ENCODE measurements at regions of chr12 and their contacts with region 1.

Region 1: DNA sequence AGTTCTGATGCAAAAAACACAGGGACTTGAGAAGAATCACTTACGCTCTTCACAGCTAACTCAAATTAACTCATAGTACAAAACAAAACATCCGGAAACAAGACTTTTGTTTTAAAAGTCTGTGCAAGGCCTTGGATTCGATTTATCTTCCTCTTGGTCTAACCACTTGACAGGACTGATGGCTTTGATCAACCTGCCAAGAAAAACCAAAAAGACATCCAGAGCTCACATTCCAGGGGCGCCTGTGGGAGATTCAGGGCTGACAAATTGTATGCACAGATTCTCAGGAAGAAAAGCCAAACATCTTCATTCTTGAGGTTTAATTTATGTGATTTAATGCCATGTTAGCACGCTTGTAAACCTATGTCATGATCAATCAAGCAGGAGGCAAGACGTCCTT is 129.1 kb upstream of the TMCC3 start:
- DNase-seq: no peak
- H3K4me3 ChIP-seq: no peak overlapping the region
- H3K27ac ChIP-seq: no peak overlapping the region
- H3K4me1 ChIP-seq: peaks cover 0 to 27% (median 14%) of the 10 kb centered on the region in 4 donors
- H3K27me3 ChIP-seq: no peaks in the 10 kb centered on the region
- CTCF ChIP-seq: no peak
- EP300 ChIP-seq: no peak
- POLR2A ChIP-seq: no peak

Region 2: DNA sequence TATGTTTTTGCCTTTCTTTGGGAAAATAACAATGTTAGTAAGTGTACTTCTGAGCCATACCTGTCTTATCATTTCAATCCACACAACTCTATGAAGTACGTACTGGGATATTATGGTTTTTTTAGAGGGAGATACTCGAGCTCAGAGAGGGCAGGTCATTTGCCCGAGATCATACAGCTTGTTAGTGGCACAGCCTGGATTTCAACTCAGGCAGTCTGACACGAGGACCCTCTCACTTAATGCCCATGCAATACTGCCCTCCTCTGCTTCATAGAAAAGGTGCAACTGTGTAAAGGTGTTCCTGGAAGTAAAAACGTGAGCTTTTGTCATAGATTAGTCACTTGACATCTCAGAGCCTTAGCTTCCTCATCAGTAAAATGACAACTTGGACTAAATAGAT is 96.0 kb after region 1 on chr12:
- intact Hi-C with region 1: loop called (anchors 10 kb)
- DNase-seq: peak; percentile 50
- H3K4me3 ChIP-seq: no peak overlapping the region
- H3K27ac ChIP-seq: peak overlapping the region in 3 of 4 donors; percentile 80 to 84 (median 82)
- H3K4me1 ChIP-seq: peaks cover 19 to 48% (median 44%) of the 10 kb centered on the region in 4 donors
- H3K27me3 ChIP-seq: peaks cover 0 to 15% (median 0%) of the 10 kb centered on the region in 4 donors
- CTCF ChIP-seq: peak; percentile 48 to 55 (median 49)
- EP300 ChIP-seq: no peak
- POLR2A ChIP-seq: no peak